K562 (cell line): ENCODE measurements at regions of chr11 and their contacts with region 1.

Region 1: GRCh38 chr11:66835768-66836405 is 7.4 kb upstream of the RCE1 start:
- DNase-seq: no peak
- ATAC-seq: peak; percentile 58
- H3K4me3 ChIP-seq: no peak overlapping the region
- H3K27ac ChIP-seq: peak overlapping the region; percentile 36; the same call in 2 of the 3 replicates
- H3K4me1 ChIP-seq: peaks cover 29 to 41% of the 10 kb centered on the region in 2 experiments
- H3K27me3 ChIP-seq: no peaks in the 10 kb centered on the region
- CTCF ChIP-seq: no peak
- EP300 ChIP-seq: peak; percentile 69
- POLR2A ChIP-seq: 0 out of 2 replicates have a peak, but pooled peaks have one; percentile 11
- RAD21 ChIP-seq: no peak

Region 2: GRCh38 chr11:66568124-66568916 is 267.6 kb before region 1 on chr11 and contains the start of gene CTSF:
- CTCF ChIA-PET with region 1: no interaction called
- POLR2A ChIA-PET with region 1: no interaction called
- in situ Hi-C with region 1: loop called (anchors 5 kb)
- intact Hi-C with region 1: no loop called
- DNase-seq: peak; percentile 88 to 100 (median 100)
- ATAC-seq: peak; percentile 98
- H3K4me3 ChIP-seq: peak within 1 kb of the TSS; percentile 48
- H3K27ac ChIP-seq: no peak within 1 kb of the TSS; the same call in 2 of the 3 replicates
- H3K4me1 ChIP-seq: peaks cover 8 to 22% of the 10 kb centered on the region in 2 experiments; a peak in 4 of 5 replicates
- H3K27me3 ChIP-seq: peaks cover 0 to 10% of the 10 kb centered on the region in 2 experiments; a peak in 2 of 5 replicates
- CTCF ChIP-seq: no peak
- EP300 ChIP-seq: no peak
- POLR2A ChIP-seq: no peak
- RAD21 ChIP-seq: no peak
- polyA plus RNA-seq, gene CTSF: 0.41 to 0.55 TPM

Region 3: DNA sequence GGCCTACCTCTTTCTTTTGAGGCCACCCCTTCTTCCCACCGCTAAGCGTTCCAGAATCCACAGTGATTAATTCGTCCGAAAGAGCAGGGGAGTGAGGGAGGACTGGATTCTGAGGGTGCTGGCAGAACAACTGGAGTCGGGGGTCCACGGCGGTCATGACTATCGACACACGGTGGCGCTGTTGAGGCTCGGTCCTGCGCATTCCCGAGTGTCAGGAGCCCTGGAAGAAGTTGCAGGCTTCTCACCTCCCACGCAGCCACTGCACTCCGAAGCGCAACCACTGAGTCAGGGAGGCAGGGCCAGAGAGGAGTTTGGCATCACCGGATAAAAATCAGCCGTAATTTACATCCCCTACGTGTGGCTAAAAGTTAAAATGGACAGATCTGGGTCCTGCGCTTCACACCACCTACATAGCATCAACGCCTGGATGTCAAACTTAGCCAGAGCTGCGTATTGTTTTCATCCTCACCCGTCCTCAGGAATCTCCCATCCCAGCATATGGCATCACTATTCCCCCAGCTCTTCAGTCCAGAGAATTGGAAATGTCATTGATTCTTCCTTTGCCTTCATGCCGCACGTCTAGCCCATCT is 256.8 kb before region 1 on chr11:
- CTCF ChIA-PET with region 1: no interaction called
- POLR2A ChIA-PET with region 1: interaction called, 3 read pairs
- in situ Hi-C with region 1: no loop called
- intact Hi-C with region 1: loop called (anchors 2 kb)
- DNase-seq: peak; percentile 82 to 86 (median 84)
- ATAC-seq: peak; percentile 96
- H3K4me3 ChIP-seq: no peak overlapping the region
- H3K27ac ChIP-seq: no peak overlapping the region
- H3K4me1 ChIP-seq: peaks cover 3 to 5% of the 10 kb centered on the region in 2 experiments; a peak in 2 of 5 replicates
- H3K27me3 ChIP-seq: no peaks in the 10 kb centered on the region
- CTCF ChIP-seq: peak; percentile 77 to 90 (median 83)
- EP300 ChIP-seq: no peak
- POLR2A ChIP-seq: no peak
- RAD21 ChIP-seq: peak; percentile 60 to 81

Region 4: GRCh38 chr11:66694732-66695207 is 141.1 kb before region 1 on chr11:
- CTCF ChIA-PET with region 1: interaction called, 73 read pairs
- POLR2A ChIA-PET with region 1: interaction called, 7 read pairs
- in situ Hi-C with region 1: loop called (anchors 5 kb)
- intact Hi-C with region 1: loop called (anchors 1 kb)
- DNase-seq: peak; percentile 84 to 95 (median 87)
- ATAC-seq: peak; percentile 99
- H3K4me3 ChIP-seq: no peak overlapping the region
- H3K27ac ChIP-seq: no peak overlapping the region; the same call in 2 of the 3 replicates
- H3K4me1 ChIP-seq: peaks cover 0 to 23% of the 10 kb centered on the region in 2 experiments; a peak in 2 of 5 replicates
- H3K27me3 ChIP-seq: no peaks in the 10 kb centered on the region
- CTCF ChIP-seq: peak; percentile 98 to 99 (median 98)
- EP300 ChIP-seq: no peak
- POLR2A ChIP-seq: no peak
- RAD21 ChIP-seq: peak; percentile 98 to 99

Region 5: DNA sequence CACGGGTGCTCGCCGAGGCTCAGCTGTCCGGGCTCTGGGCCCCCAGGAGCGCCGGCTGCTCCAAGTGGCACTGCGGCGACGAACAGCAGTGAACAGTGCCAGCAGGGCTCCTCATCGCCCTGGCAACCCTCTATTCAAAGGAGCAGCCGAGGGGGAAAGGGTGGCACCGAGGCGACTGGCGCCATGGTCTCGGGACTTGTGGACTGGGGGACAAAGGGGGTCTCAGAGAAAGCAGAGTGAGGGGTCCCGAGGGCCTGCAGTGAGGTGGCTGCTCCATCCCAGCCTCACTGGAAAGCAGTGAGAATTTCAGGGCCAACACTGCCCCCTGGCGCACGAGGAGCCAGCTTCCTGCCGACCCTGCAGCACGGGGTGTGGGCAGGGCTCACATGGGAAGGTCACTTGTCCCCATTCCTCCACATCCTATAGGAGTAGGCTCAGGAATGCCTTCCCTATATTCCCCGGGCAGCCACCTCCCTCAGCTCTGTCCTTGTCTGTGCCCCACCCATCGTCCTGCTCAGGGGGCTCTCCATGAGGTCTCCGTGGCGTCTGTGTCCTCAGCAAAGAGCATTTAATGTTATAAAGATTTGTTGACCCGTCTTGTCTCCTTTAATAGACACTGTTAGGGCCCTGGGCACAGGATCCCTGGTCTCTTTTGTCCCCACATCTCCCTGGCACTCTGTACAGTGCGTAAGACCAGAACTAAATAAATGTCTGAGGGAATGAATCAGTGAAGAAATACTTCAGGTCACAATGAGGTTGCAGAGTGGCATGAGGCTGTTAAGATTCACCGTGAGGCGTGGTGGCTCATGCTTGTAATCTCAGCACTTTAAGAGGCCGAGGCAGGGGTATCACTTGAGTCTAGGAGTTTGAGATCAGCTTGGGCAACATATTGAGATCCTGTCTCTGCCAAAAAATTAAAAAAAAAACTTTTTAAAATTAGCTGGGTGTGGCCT is 47.4 kb after region 1 on chr11:
- CTCF ChIA-PET with region 1: interaction called, 3 read pairs
- POLR2A ChIA-PET with region 1: no interaction called
- in situ Hi-C with region 1: no loop called
- intact Hi-C with region 1: loop called (anchors 2 kb)
- DNase-seq: peak; percentile 64 to 78 (median 64)
- ATAC-seq: peak; percentile 86
- H3K4me3 ChIP-seq: no peak overlapping the region
- H3K27ac ChIP-seq: no peak overlapping the region
- H3K4me1 ChIP-seq: peaks cover 24 to 67% of the 10 kb centered on the region in 2 experiments; a peak in 4 of 5 replicates
- H3K27me3 ChIP-seq: no peaks in the 10 kb centered on the region
- CTCF ChIP-seq: peak; percentile 75 to 83 (median 77)
- EP300 ChIP-seq: no peak
- POLR2A ChIP-seq: no peak
- RAD21 ChIP-seq: peak; percentile 57 to 84